ENCODE measurements at regions of chr2 and their contacts with region 1.

Region 1: DNA sequence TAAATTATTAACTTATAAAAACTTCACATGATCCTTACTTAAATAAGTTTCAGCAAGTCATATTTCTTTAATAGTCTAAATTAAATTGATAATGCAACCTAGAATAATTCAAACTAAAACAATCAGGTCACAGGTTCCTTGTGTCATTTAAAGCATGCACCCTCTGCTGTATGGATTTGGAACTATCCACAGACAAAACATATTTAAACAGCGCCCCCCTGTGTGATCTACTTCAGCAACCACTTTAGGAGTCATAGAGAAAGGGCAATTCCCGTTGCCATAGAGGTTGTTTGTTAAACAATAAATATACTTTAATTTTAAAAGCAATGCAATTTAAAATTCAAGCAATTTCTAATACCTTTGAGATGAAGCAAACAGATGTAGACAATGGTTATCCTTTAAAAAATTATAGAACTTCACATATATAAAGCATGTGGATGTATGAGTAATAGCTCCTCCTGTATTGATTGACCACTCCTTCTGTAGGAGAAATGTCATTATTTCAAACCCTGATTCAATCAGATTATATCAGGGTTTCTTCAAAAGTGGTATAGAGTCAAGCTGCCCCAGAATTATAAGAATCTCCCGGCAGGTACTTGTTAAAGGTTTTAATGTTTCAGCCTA is 21.2 kb downstream of the GRB14 start:
- DNase-seq: peak; percentile 91
- H3K4me3 ChIP-seq: no peak overlapping the region
- H3K27ac ChIP-seq: peak overlapping the region; percentile 31
- H3K4me1 ChIP-seq: peaks cover 20% of the 10 kb centered on the region
- H3K27me3 ChIP-seq: no peaks in the 10 kb centered on the region
- CTCF ChIP-seq: peak; percentile 77 to 86
- POLR2A ChIP-seq: no peak

Region 2: GRCh38 chr2:164613321-164613982 is 13.4 kb after region 1 on chr2:
- CTCF ChIA-PET with region 1: interaction called, 17 read pairs
- POLR2A ChIA-PET with region 1: no interaction called
- dilution Hi-C with region 1: no loop called
- intact Hi-C with region 1: no loop called
- DNase-seq: no peak
- H3K4me3 ChIP-seq: no peak overlapping the region
- H3K27ac ChIP-seq: no peak overlapping the region
- H3K4me1 ChIP-seq: peaks cover 9% of the 10 kb centered on the region
- H3K27me3 ChIP-seq: no peaks in the 10 kb centered on the region
- CTCF ChIP-seq: no peak
- POLR2A ChIP-seq: no peak

Region 3: GRCh38 chr2:164620873-164621626 is 21.0 kb after region 1 on chr2 and contains the start of gene GRB14:
- CTCF ChIA-PET with region 1: interaction called, 17 read pairs
- POLR2A ChIA-PET with region 1: no interaction called
- dilution Hi-C with region 1: no loop called
- intact Hi-C with region 1: no loop called
- DNase-seq: peak; percentile 34
- H3K4me3 ChIP-seq: peak within 1 kb of the TSS; percentile 55 to 67 (median 66)
- H3K27ac ChIP-seq: no peak within 1 kb of the TSS
- H3K4me1 ChIP-seq: peaks cover 42% of the 10 kb centered on the region
- H3K27me3 ChIP-seq: no peaks in the 10 kb centered on the region
- CTCF ChIP-seq: no peak
- POLR2A ChIP-seq: peak; percentile 25
- total RNA-seq, gene GRB14: 2.7 and 10.3 TPM in 2 replicates